IMR-90 (cell line): ENCODE measurements at regions of chr17 and their contacts with region 1.

Region 1: DNA sequence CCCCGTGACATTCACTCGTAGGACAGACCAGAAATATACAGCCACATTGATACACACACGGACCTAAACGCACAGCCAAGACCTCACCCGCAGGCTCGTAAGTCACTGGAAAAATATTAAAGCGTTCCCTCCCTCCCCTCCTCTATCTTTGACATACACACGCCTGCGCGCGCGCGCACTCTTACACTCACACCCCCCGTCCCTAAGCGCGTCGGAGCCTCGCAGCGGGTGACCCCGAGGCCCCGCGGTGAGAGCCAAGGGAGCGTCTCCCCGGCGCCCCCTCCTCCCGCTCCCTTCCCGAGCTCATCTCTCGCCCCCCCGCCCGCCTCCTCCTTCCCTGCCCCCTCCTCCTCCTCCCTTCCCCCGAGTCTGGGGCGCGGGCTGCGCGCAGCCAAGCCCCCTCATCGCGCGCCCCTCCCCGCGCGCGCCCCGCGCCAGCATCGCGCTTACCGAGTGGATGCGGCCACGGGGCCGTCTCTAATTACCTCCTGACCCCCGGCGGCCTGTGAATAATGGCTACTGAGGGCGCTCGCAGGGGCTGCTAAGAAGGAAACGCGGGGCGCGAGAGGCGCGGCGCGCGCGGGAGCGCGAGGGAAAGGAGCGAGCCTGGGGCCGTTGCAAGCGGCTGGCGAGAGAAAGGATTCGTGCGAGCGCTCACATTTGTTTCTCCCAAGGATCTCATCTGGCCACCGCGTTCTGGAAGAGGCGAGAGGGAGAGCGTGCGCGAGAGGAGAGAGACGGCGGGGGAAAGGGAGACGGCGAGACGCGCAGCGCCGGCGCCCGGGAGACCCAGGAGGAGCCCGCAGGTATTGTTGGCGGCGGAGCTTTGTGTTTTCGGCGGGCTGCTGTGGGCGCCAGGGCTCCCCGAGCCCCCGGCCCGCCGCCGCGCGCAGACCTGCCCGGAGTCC is 42.4 kb downstream of the RAI1 start:
- DNase-seq: peak; percentile 90
- ATAC-seq: peak; percentile 74
- H3K4me3 ChIP-seq: peak overlapping the region; percentile 48
- H3K27ac ChIP-seq: peak overlapping the region; percentile 78
- H3K4me1 ChIP-seq: peaks cover 37% of the 10 kb centered on the region
- H3K27me3 ChIP-seq: no peaks in the 10 kb centered on the region
- CTCF ChIP-seq: no peak
- POLR2A ChIP-seq: no peak; the same call in 1 of the 2 replicates
- RAD21 ChIP-seq: no peak

Region 2: GRCh38 chr17:17151962-17152361 is 571.6 kb before region 1 on chr17:
- CTCF ChIA-PET with region 1: no interaction called
- POLR2A ChIA-PET with region 1: no interaction called
- dilution Hi-C with region 1: no loop called
- in situ Hi-C with region 1: no loop called
- intact Hi-C with region 1: no loop called
- DNase-seq: peak; percentile 96
- ATAC-seq: peak; percentile 85
- H3K4me3 ChIP-seq: no peak overlapping the region
- H3K27ac ChIP-seq: peak overlapping the region; percentile 60
- H3K4me1 ChIP-seq: peaks cover 28% of the 10 kb centered on the region
- H3K27me3 ChIP-seq: no peaks in the 10 kb centered on the region
- CTCF ChIP-seq: no peak
- POLR2A ChIP-seq: no peak
- RAD21 ChIP-seq: no peak

Region 3: DNA sequence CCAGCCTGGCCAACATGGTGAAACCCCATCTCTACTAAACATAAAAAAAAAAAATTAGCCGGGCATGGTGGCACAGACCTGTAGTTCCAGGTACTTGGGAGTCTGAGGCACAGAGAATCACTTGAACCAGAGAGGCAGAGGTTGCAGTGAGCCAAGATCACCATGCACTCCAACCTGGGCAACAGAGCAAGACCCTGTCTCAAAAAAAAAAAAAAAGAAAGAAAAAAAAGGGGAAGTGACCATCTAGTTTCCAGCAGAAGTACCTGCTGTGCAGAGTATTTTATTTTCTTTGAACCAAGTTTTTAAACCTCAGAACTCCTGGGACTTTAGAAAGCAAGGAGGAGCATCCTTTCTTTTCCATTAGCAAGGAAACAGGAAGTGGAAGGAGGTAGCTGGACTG is 322.1 kb after region 1 on chr17:
- CTCF ChIA-PET with region 1: no interaction called
- POLR2A ChIA-PET with region 1: interaction called, 28 read pairs
- dilution Hi-C with region 1: no loop called
- in situ Hi-C with region 1: no loop called
- intact Hi-C with region 1: no loop called
- DNase-seq: no peak
- ATAC-seq: no peak
- H3K4me3 ChIP-seq: no peak overlapping the region
- H3K27ac ChIP-seq: no peak overlapping the region
- H3K4me1 ChIP-seq: peaks cover 6% of the 10 kb centered on the region; the same call in 1 of the 2 replicates
- H3K27me3 ChIP-seq: no peaks in the 10 kb centered on the region
- CTCF ChIP-seq: no peak
- POLR2A ChIP-seq: no peak
- RAD21 ChIP-seq: no peak